Vagina (tissue), 2 donors: ENCODE measurements at regions of chr21 and their contacts with region 1.

Region 1: GRCh38 chr21:36684957-36685714 is 13.8 kb upstream of the SIM2 start:
- DNase-seq: no peak
- H3K4me3 ChIP-seq: no peak overlapping the region
- H3K27ac ChIP-seq: no peak overlapping the region
- H3K4me1 ChIP-seq: no peaks in the 10 kb centered on the region
- H3K27me3 ChIP-seq: no peaks in the 10 kb centered on the region
- CTCF ChIP-seq: no peak
- POLR2A ChIP-seq: no peak

Region 2: DNA sequence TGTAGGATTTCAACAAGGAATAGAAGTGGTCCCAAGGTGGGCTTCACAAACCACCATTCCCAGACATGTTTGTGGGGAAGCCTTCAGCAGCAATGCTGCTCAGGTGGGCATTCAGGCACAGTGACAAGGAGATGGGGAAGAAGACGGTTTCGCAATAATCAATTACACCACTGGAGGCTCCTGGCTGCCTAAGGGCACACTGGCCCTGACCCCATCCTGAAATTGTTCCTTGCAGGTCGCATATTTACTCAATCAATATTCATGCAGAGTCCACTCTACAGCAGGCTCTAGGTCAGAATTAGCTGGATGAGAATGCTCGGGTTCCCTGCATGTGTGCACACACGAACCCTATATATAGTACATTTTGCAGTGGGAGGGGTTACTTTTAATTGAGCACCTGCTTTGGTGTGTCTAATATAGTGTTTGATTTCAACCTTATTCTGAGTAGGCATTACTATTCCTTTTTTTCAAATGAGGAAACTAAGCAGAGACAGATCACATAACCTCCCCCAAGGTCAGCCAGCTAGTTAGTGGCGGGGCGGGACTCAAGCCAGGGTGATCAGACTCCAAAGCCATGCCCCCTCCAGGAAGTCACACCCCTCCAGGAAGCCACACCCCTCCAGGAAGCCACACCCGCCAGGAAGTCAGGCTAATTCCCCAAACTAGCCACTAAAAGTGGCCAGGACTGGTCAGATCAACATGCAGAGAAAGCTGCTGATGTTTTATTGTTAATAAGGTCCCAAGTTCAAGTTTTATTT is 174.8 kb after region 1 on chr21:
- intact Hi-C with region 1: loop called (anchors 5 kb)
- DNase-seq: no peak
- H3K4me3 ChIP-seq: no peak overlapping the region
- H3K27ac ChIP-seq: no peak overlapping the region
- H3K4me1 ChIP-seq: no peaks in the 10 kb centered on the region
- H3K27me3 ChIP-seq: no peaks in the 10 kb centered on the region
- CTCF ChIP-seq: no peak
- POLR2A ChIP-seq: no peak